ENCODE measurements at regions of chr15 and their contacts with region 1.

Region 1: GRCh38 chr15:44711356-44712107 is at the start of gene B2M:
- DNase-seq: peak; percentile 97 to 99 (median 98)
- H3K4me3 ChIP-seq: peak within 1 kb of the TSS; percentile 63 to 100 (median 96)
- H3K4me3 Mint-ChIP-seq: peak within 1 kb of the TSS; percentile 98 to 100
- H3K27ac ChIP-seq: peak within 1 kb of the TSS; percentile 99 to 100
- H3K27ac Mint-ChIP-seq: peak within 1 kb of the TSS; percentile 99 to 100 (median 100)
- H3K4me1 ChIP-seq: peaks cover 36 to 46% of the 10 kb centered on the region in 2 donors
- H3K4me1 Mint-ChIP-seq: peaks cover 41% of the 10 kb centered on the region
- H3K27me3 ChIP-seq: no peaks in the 10 kb centered on the region
- H3K27me3 Mint-ChIP-seq: peaks cover 2 to 9% (median 4%) of the 10 kb centered on the region in 3 donors
- CTCF ChIP-seq: no peak
- polyA plus RNA-seq, gene B2M: 17,356 to 28,278 (median 28,259) TPM

Region 2: DNA sequence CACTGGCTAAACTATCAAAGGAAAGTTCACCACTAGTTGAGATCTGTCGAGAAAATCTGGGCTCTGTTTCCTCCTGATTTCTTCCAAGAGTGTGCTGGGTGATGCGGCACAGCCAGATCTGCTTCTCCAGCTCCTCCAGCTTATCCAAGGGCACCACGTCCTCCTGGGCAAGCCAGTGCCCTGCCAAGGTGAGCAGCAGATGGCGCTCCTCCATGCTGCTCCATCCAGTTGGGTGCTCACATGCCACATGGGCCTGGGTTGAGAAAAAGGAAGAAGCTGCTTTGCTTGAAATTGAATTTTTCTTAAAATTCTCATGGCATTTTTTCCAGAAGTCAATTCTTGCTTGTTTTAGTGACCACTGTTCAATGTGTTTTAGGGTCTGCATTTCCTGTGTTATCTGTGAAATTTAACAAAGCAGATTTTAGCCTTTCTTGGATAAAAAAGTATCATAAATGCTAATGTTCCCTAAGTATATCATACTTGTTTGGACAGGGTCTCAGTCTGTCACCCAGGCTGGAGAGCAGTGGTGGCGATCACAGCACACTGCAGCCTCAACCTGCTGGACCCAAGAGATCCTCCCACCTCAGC is 127.3 kb before region 1 on chr15:
- intact Hi-C with region 1: no loop called
- DNase-seq: peak; percentile 5 to 30 (median 16)
- H3K4me3 ChIP-seq: no peak overlapping the region
- H3K4me3 Mint-ChIP-seq: no peak overlapping the region
- H3K27ac ChIP-seq: no peak overlapping the region
- H3K27ac Mint-ChIP-seq: peak overlapping the region in 1 of 7 donors; percentile 40
- H3K4me1 ChIP-seq: no peaks in the 10 kb centered on the region
- H3K4me1 Mint-ChIP-seq: no peaks in the 10 kb centered on the region
- H3K27me3 ChIP-seq: no peaks in the 10 kb centered on the region
- H3K27me3 Mint-ChIP-seq: no peaks in the 10 kb centered on the region
- CTCF ChIP-seq: peak; percentile 16

Region 3: GRCh38 chr15:44633603-44634002 is 77.9 kb before region 1 on chr15:
- intact Hi-C with region 1: no loop called
- DNase-seq: peak; percentile 9 to 58 (median 13)
- H3K4me3 ChIP-seq: no peak overlapping the region
- H3K4me3 Mint-ChIP-seq: no peak overlapping the region
- H3K27ac ChIP-seq: peak overlapping the region in 1 of 2 donors; percentile 64
- H3K27ac Mint-ChIP-seq: peak overlapping the region; percentile 47 to 93 (median 89)
- H3K4me1 ChIP-seq: no peaks in the 10 kb centered on the region
- H3K4me1 Mint-ChIP-seq: peaks cover 2% of the 10 kb centered on the region
- H3K27me3 ChIP-seq: no peaks in the 10 kb centered on the region
- H3K27me3 Mint-ChIP-seq: no peaks in the 10 kb centered on the region
- CTCF ChIP-seq: no peak

Region 4: GRCh38 chr15:44728576-44729407 is 17.3 kb after region 1 on chr15:
- intact Hi-C with region 1: loop called (anchors 1 to 2 kb)
- DNase-seq: peak; percentile 99
- H3K4me3 ChIP-seq: peak overlapping the region; percentile 78 to 93 (median 80)
- H3K4me3 Mint-ChIP-seq: peak overlapping the region; percentile 96 to 98
- H3K27ac ChIP-seq: peak overlapping the region; percentile 90 to 99
- H3K27ac Mint-ChIP-seq: peak overlapping the region; percentile 99 to 100 (median 100)
- H3K4me1 ChIP-seq: peaks cover 58 to 68% of the 10 kb centered on the region in 2 donors
- H3K4me1 Mint-ChIP-seq: peaks cover 63% of the 10 kb centered on the region
- H3K27me3 ChIP-seq: no peaks in the 10 kb centered on the region
- H3K27me3 Mint-ChIP-seq: peaks cover 0 to 7% (median 0%) of the 10 kb centered on the region in 3 donors
- CTCF ChIP-seq: no peak

Region 5: GRCh38 chr15:44738340-44738984 is 26.9 kb after region 1 on chr15:
- intact Hi-C with region 1: loop called in 1 of 2 experiments (anchors 2 kb)
- DNase-seq: peak; percentile 34 to 78 (median 60)
- H3K4me3 ChIP-seq: no peak overlapping the region
- H3K4me3 Mint-ChIP-seq: no peak overlapping the region
- H3K27ac ChIP-seq: no peak overlapping the region
- H3K27ac Mint-ChIP-seq: peak overlapping the region in 1 of 7 donors; percentile 35
- H3K4me1 ChIP-seq: peaks cover 23 to 24% of the 10 kb centered on the region in 2 donors
- H3K4me1 Mint-ChIP-seq: peaks cover 29% of the 10 kb centered on the region
- H3K27me3 ChIP-seq: no peaks in the 10 kb centered on the region
- H3K27me3 Mint-ChIP-seq: peaks cover 0 to 3% (median 0%) of the 10 kb centered on the region in 3 donors
- CTCF ChIP-seq: peak; percentile 79

Region 6: DNA sequence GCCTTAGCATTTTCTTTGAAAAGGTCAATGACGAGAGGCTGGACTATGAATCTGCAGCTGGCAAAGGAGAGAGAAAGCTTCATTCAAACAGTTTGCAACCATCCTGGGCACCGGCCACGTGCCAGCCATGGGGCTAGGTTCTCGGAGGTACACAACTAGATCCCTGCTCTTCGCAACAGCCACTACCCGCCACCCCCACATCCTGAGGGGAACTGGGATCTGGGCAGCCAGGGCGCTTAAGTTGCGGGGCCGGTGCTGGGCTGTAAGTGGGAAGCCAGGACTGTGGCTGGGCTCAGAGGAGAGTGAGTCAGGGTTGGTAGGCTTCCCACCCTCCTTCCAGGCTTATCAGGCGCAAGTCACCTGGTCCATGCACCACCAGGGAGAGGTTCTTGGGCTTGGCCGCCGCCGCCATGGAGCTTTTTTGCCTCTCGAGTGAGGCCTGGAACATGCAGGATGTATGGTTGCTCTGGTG is 149.9 kb after region 1 on chr15:
- intact Hi-C with region 1: no loop called
- DNase-seq: no peak
- H3K4me3 ChIP-seq: no peak overlapping the region
- H3K4me3 Mint-ChIP-seq: no peak overlapping the region
- H3K27ac ChIP-seq: no peak overlapping the region
- H3K27ac Mint-ChIP-seq: no peak overlapping the region
- H3K4me1 ChIP-seq: no peaks in the 10 kb centered on the region
- H3K4me1 Mint-ChIP-seq: peaks cover 7% of the 10 kb centered on the region
- H3K27me3 ChIP-seq: no peaks in the 10 kb centered on the region
- H3K27me3 Mint-ChIP-seq: no peaks in the 10 kb centered on the region
- CTCF ChIP-seq: no peak